ENCODE measurements at regions of chr2 and their contacts with region 1.

Region 1: GRCh38 chr2:120680136-120680761 is 55.4 kb upstream of the GLI2 start:
- DNase-seq: peak; percentile 79
- H3K4me3 ChIP-seq: no peak overlapping the region
- H3K27ac ChIP-seq: no peak overlapping the region
- H3K4me1 ChIP-seq: peaks cover 0 to 4% (median 4%) of the 10 kb centered on the region in 4 donors
- H3K27me3 ChIP-seq: peaks cover 24% of the 10 kb centered on the region
- CTCF ChIP-seq: peak; percentile 51 to 90 (median 60)
- EP300 ChIP-seq: no peak
- POLR2A ChIP-seq: no peak

Region 2: DNA sequence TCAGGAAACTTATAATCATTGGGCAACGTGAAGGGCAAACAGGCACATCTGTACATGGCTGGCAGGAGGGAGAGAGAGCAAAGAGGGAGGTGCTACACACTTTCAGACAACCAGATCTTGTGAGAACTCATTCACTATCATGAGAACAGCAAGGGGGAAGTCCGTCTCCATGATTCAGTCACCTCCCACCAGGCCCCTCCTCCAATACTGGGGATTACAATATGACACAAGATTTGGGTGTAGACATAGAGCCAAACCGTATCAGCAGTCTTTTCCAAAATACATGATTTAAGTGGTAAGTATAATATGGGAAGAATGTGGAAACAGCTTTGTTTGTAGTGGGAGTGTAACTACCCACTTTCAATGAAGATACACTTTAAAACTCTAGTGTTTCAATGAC is 602.4 kb before region 1 on chr2:
- in situ Hi-C with region 1: no loop called
- intact Hi-C with region 1: loop called (anchors 10 kb)
- DNase-seq: no peak
- H3K4me3 ChIP-seq: no peak overlapping the region
- H3K27ac ChIP-seq: no peak overlapping the region
- H3K4me1 ChIP-seq: no peaks in the 10 kb centered on the region
- H3K27me3 ChIP-seq: no peaks in the 10 kb centered on the region
- CTCF ChIP-seq: no peak
- EP300 ChIP-seq: no peak
- POLR2A ChIP-seq: no peak

Region 3: GRCh38 chr2:120330946-120331822 is 349.1 kb before region 1 on chr2:
- in situ Hi-C with region 1: loop called in 1 of 4 experiments (anchors 10 kb)
- intact Hi-C with region 1: no loop called
- DNase-seq: no peak
- H3K4me3 ChIP-seq: no peak overlapping the region
- H3K27ac ChIP-seq: no peak overlapping the region
- H3K4me1 ChIP-seq: no peaks in the 10 kb centered on the region
- H3K27me3 ChIP-seq: peaks cover 7% of the 10 kb centered on the region
- CTCF ChIP-seq: no peak
- EP300 ChIP-seq: no peak
- POLR2A ChIP-seq: no peak

Region 4: DNA sequence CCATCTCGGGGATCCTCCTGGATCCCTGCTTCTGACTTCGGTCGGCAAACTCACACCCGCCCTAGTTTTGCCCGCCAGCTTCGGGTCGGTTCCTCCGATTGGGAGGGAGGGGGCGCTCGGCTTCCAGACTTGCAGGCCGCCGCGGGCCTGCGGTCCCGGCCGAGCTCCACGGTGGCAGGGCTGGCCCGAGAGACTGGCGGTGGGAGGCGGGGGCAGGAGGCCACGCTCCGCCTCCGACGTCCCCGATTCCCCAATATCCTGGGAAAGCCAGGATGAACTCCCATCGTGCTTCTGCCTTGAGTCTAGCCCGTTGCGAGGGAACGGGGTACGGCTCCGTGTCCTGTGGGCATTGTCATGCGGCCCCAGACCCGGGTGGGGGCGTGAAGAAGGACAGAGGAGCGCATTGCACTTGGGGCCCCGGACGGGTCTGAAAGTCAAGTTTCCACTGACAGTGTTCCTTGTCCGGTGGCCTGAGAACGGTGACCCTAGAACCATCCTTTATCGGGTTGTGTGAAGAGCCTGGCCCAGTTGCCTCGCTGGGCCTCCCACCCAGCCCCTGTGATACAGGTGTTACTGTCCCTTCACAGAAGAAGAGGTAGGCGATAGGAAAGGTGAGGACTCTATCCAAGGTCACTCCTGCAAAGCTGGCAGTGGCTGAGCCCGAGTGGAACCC is 336.7 kb before region 1 on chr2:
- in situ Hi-C with region 1: loop called (anchors 5 to 10 kb)
- intact Hi-C with region 1: loop called (anchors 2 kb)
- DNase-seq: peak; percentile 66
- H3K4me3 ChIP-seq: peak overlapping the region in 1 of 4 donors; percentile 5
- H3K27ac ChIP-seq: no peak overlapping the region
- H3K4me1 ChIP-seq: peaks cover 3 to 39% (median 32%) of the 10 kb centered on the region in 4 donors
- H3K27me3 ChIP-seq: peaks cover 96% of the 10 kb centered on the region
- CTCF ChIP-seq: peak; percentile 59 to 72 (median 62)
- EP300 ChIP-seq: no peak
- POLR2A ChIP-seq: no peak

Region 5: DNA sequence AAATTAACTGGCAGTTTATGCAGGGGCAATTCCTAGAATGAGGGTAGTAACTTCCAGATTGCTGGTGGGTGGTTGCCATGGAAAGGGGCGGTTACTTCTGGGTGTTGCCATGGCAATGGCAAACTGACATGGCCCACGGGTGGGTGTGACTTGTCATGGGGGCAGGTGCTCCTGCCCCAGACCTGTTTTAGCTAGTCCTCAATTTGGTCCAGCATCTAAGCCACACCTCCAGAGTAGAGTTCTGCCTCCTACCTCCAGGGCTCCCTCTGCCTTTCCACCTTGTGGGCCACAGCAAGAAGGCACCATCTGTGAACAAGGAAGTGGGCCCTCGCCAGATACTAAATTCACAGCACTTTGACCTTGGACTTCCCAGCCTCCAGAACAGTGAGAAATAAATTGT is 456.1 kb after region 1 on chr2:
- in situ Hi-C with region 1: no loop called
- intact Hi-C with region 1: no loop called
- DNase-seq: no peak
- H3K4me3 ChIP-seq: no peak overlapping the region
- H3K27ac ChIP-seq: no peak overlapping the region
- H3K4me1 ChIP-seq: no peaks in the 10 kb centered on the region
- H3K27me3 ChIP-seq: no peaks in the 10 kb centered on the region
- CTCF ChIP-seq: no peak
- EP300 ChIP-seq: no peak
- POLR2A ChIP-seq: no peak

Region 6: DNA sequence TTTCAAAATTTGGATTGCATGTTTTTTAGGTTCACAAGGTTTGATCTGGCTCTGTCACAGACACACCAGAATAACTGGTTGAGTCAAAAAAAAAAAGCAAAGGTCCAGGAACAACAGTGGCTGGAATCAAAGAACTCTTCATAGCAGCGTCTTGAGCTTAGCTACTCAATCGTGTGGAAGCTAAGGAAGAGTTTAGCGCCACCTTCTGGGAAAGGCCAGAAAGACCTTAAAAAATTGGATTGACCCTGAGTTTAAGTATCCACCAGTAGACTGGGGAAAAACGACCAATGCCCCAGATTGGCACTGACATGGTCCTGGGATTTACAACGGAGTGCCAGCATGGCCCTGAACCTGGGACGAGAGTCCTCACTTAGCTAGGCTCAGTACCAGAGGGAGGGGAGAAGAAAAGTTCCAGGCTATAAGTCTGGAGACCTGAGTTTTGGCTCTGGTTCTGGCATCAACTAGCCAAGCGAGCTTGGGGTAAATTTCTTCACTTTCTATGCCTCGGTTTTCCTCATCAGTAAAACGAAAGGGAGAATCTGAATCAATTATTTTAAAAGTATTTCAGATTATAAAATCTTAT is 675.9 kb after region 1 on chr2:
- in situ Hi-C with region 1: loop called in 2 of 4 experiments (anchors 25 kb)
- intact Hi-C with region 1: no loop called
- DNase-seq: peak; percentile 59
- H3K4me3 ChIP-seq: no peak overlapping the region
- H3K27ac ChIP-seq: peak overlapping the region in 3 of 4 donors; percentile 70 to 75 (median 73)
- H3K4me1 ChIP-seq: peaks cover 3 to 26% (median 13%) of the 10 kb centered on the region in 4 donors
- H3K27me3 ChIP-seq: no peaks in the 10 kb centered on the region
- CTCF ChIP-seq: peak; percentile 56 to 71 (median 69)
- EP300 ChIP-seq: no peak
- POLR2A ChIP-seq: no peak